RWPE1 (cell line): ENCODE measurements at regions of chr14 and their contacts with region 1.

Region 1: DNA sequence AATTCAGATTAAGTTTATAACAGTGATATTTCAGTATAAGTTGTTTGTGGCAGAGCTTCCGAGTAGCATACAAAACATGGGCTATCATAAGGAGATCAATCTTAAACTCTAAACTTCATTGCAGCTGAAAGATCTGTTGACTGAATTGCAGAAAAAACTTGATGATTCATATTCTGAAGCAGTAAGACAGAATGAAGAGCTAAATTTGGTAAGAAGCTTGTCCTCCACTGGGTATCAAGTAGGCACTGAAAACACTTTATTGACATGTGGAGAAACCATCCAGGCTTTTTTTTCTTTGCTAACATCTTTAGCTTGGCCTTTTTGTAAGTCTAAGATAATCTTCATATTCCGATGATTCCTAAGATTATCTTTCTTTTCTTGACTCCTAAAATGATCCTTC is 93.0 kb downstream of the KTN1 start:
- DNase-seq: no peak
- H3K27ac ChIP-seq: no peak overlapping the region
- CTCF ChIP-seq: no peak

Region 2: DNA sequence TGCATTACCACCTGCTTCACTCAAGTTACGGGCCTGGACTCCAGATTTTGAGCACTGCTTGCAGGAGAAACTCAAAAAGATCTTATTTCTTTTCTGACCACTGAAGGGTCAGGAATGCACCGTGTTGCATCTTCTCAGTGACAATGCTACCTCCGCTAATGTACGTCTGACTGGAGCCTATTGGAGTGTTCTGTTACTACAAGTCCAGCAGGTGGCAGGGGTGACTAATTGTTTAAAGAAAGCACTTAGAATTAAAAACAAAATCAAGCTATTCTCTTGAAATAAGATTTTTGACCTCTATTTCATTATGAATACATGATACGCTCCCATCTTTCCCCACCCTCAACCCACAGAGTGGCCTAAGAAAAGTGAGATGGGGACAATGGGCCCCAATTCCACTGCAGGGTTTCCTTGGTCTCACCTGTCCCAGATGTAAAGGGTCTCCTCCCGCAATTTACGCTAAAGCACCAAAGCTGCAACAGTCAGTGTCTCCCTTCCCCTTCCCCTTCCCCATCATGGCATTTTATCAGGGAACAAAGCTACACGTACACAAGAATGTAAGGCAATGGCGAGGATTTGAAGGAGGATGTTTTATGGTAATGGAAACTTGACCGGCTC is 234.9 kb before region 1 on chr14:
- CTCF ChIA-PET with region 1: interaction called, 11 read pairs
- POLR2A ChIA-PET with region 1: no interaction called
- DNase-seq: peak; percentile 64
- H3K27ac ChIP-seq: no peak overlapping the region
- CTCF ChIP-seq: peak; percentile 69